Naive thymus-derived CD4-positive, alpha-beta T cell (primary cell): ENCODE measurements at regions of chr2 and their contacts with region 1.

Region 1: GRCh38 chr2:201071479-201072200 is at the starts of genes HYCC2 and NDUFB3:
- DNase-seq: peak; percentile 79 to 96 (median 95)
- ATAC-seq: peak; percentile 98
- H3K4me3 ChIP-seq: peak within 1 kb of the TSS; percentile 92
- H3K4me3 Mint-ChIP-seq: peak within 1 kb of the TSS; percentile 91 to 99 (median 94)
- H3K27ac ChIP-seq: peak within 1 kb of the TSS; percentile 83
- H3K27ac Mint-ChIP-seq: peak within 1 kb of the TSS; percentile 86 to 99 (median 95)
- H3K4me1 ChIP-seq: peaks cover 32 to 36% of the 10 kb centered on the region in 2 donors
- H3K4me1 Mint-ChIP-seq: peaks cover 31 to 74% (median 55%) of the 10 kb centered on the region in 7 donors
- H3K27me3 ChIP-seq: no peaks in the 10 kb centered on the region
- H3K27me3 Mint-ChIP-seq: no peaks in the 10 kb centered on the region
- total RNA-seq, gene HYCC2: 34.8 to 38.3 (median 36.1) TPM
- total RNA-seq, gene NDUFB3: 18.3 to 109 (median 38.3) TPM

Region 2: DNA sequence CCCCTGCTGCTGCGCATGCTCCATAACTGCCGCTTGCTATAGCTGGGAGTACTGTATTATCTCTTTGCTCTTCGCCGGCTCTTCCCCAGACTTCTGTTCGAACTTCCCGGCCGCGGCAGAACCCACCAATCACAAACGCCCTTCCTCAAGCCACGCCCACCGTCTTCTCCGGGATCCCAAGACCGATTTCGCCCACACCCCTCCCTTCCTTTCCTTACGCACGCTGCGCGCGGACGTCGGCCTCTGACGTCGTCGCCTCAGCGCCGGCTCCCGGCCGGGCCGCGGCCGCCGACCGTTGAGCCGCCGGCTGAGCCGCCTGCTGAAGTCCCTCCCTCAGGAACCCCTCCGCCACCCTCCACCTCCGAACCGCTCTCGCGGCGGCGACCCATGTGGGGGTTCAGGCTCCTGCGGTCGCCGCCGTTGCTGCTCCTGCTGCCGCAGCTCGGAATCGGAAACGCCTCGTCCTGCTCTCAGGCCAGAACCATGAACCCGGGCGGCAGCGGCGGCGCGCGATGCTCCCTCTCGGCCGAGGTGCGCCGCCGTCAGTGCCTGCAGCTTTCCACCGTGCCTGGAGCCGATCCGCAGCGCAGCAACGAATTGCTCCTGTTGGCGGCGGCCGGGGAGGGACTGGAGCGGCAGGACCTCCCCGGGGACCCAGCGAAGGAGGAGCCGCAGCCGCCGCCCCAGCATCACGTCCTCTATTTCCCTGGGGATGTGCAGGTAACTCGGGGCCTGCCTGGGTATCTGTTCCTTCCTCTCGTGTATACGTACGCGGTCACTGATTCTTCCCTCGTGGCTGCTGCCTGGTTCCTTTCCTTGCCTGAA is 1160.4 kb before region 1 on chr2 and contains the start of gene C2orf69:
- CTCF ChIA-PET with region 1: no interaction called
- POLR2A ChIA-PET with region 1: no interaction called
- intact Hi-C with region 1: loop called in 1 of 2 experiments (anchors 5 kb)
- DNase-seq: peak; percentile 80 to 92 (median 83)
- ATAC-seq: peak; percentile 93
- H3K4me3 ChIP-seq: peak within 1 kb of the TSS; percentile 75
- H3K4me3 Mint-ChIP-seq: peak within 1 kb of the TSS; percentile 89 to 100 (median 98)
- H3K27ac ChIP-seq: peak within 1 kb of the TSS; percentile 89
- H3K27ac Mint-ChIP-seq: peak within 1 kb of the TSS; percentile 72 to 95 (median 94)
- H3K4me1 ChIP-seq: peaks cover 11 to 19% of the 10 kb centered on the region in 2 donors
- H3K4me1 Mint-ChIP-seq: peaks cover 26 to 47% (median 37%) of the 10 kb centered on the region in 7 donors
- H3K27me3 ChIP-seq: no peaks in the 10 kb centered on the region
- H3K27me3 Mint-ChIP-seq: peaks cover 0 to 14% (median 8%) of the 10 kb centered on the region in 5 donors
- total RNA-seq, gene C2orf69: 10.1 to 15.4 (median 12.7) TPM

Region 3: GRCh38 chr2:200578778-200579177 is 492.9 kb before region 1 on chr2:
- CTCF ChIA-PET with region 1: no interaction called
- POLR2A ChIA-PET with region 1: no interaction called
- intact Hi-C with region 1: loop called in 1 of 2 experiments (anchors 1 kb)
- DNase-seq: peak in 4 of 9 donors; percentile 3 to 13 (median 10)
- ATAC-seq: peak; percentile 64
- H3K4me3 ChIP-seq: no peak overlapping the region
- H3K4me3 Mint-ChIP-seq: no peak overlapping the region
- H3K27ac ChIP-seq: no peak overlapping the region
- H3K27ac Mint-ChIP-seq: no peak overlapping the region
- H3K4me1 ChIP-seq: no peaks in the 10 kb centered on the region
- H3K4me1 Mint-ChIP-seq: peaks cover 0 to 15% (median 0%) of the 10 kb centered on the region in 7 donors
- H3K27me3 ChIP-seq: no peaks in the 10 kb centered on the region
- H3K27me3 Mint-ChIP-seq: peaks cover 0 to 5% (median 4%) of the 10 kb centered on the region in 5 donors

Region 4: DNA sequence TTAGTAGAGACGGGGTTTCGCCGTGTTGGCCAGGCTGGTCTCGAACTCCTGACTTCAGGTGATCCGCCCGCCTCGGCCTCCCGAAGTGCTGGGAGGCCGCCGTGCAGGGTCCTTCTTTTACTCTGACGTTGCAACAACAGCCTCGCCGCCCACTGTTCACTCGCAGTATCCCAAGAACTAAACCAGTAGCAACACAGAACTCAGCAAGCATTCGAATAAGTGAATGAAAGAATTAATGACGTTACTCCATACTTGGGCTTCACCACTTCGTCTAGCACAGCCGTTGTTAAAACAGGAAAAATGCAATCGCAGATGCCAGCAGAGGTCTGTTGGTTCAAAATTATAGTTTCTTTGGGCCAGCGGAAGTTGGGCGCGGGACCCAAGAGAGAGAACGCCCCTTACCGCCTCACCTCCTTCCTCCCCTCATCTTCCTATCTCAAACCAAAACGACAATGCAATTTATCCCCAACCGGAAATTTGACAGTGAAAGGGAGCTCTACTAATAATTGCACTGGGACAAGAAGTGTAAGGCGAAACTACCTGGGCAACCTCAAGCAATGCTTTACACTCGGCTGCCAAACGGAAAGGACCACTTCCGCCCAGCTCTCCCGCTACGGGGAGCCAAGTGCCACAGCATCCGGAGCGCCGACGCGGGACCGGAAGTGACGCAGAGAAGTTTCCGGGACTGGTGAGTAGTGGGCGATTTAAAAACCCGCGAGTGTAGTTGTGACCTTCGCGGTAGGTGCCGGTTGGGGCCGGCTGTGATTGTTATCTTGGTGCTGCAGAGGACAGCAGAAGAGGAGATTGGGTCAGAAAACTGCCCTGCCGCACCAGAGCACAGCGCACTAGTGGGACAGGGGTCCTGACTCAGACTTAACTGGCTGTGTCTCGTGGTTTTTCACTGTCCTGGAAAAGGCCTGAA is 182.7 kb before region 1 on chr2 and contains the starts of genes NIF3L1 and PPIL3:
- CTCF ChIA-PET with region 1: interaction called, 3 read pairs
- POLR2A ChIA-PET with region 1: interaction called, 7 read pairs
- intact Hi-C with region 1: loop called (anchors 1 kb)
- DNase-seq: peak; percentile 88 to 97 (median 95)
- ATAC-seq: peak; percentile 89
- H3K4me3 ChIP-seq: peak within 1 kb of the TSS; percentile 83
- H3K4me3 Mint-ChIP-seq: peak within 1 kb of the TSS; percentile 88 to 100 (median 96)
- H3K27ac ChIP-seq: peak within 1 kb of the TSS; percentile 86
- H3K27ac Mint-ChIP-seq: peak within 1 kb of the TSS; percentile 97 to 100 (median 100)
- H3K4me1 ChIP-seq: peaks cover 23 to 26% of the 10 kb centered on the region in 2 donors
- H3K4me1 Mint-ChIP-seq: peaks cover 35 to 75% (median 60%) of the 10 kb centered on the region in 7 donors
- H3K27me3 ChIP-seq: no peaks in the 10 kb centered on the region
- H3K27me3 Mint-ChIP-seq: no peaks in the 10 kb centered on the region
- total RNA-seq, gene NIF3L1: 11.5 to 33.9 (median 31.4) TPM
- total RNA-seq, gene PPIL3: 28.5 to 69.7 (median 49.1) TPM

Region 5: GRCh38 chr2:201040867-201041628 is 30.6 kb before region 1 on chr2:
- CTCF ChIA-PET with region 1: no interaction called
- POLR2A ChIA-PET with region 1: no interaction called
- intact Hi-C with region 1: no loop called
- DNase-seq: no peak
- ATAC-seq: no peak
- H3K4me3 ChIP-seq: no peak overlapping the region
- H3K4me3 Mint-ChIP-seq: no peak overlapping the region
- H3K27ac ChIP-seq: no peak overlapping the region
- H3K27ac Mint-ChIP-seq: peak overlapping the region in 2 of 9 donors; percentile 1 to 60
- H3K4me1 ChIP-seq: no peaks in the 10 kb centered on the region
- H3K4me1 Mint-ChIP-seq: peaks cover 3 to 16% (median 9%) of the 10 kb centered on the region in 7 donors
- H3K27me3 ChIP-seq: no peaks in the 10 kb centered on the region
- H3K27me3 Mint-ChIP-seq: no peaks in the 10 kb centered on the region

Region 6: DNA sequence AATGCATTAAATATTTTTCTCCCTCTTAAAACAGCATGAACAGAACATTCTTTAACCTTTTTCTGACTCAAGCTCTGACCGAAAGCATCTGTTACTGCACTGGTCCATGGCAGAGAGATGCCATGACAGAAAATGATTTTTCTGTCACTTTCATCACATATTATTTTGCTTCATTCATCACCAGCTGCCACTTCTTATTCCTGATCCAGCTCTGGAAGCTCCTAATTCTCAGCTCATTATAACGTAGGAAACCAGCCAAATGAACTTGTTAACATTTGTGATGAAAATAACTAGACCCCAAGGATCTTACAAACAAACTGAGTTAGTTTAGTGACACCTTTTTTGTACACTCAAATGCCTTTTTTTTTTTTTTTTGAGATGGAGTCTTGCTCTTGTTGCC is 36.7 kb after region 1 on chr2:
- CTCF ChIA-PET with region 1: no interaction called
- POLR2A ChIA-PET with region 1: no interaction called
- intact Hi-C with region 1: no loop called
- DNase-seq: no peak
- ATAC-seq: no peak
- H3K4me3 ChIP-seq: no peak overlapping the region
- H3K4me3 Mint-ChIP-seq: no peak overlapping the region
- H3K27ac ChIP-seq: no peak overlapping the region
- H3K27ac Mint-ChIP-seq: no peak overlapping the region
- H3K4me1 ChIP-seq: no peaks in the 10 kb centered on the region
- H3K4me1 Mint-ChIP-seq: peaks cover 1 to 13% (median 4%) of the 10 kb centered on the region in 7 donors
- H3K27me3 ChIP-seq: no peaks in the 10 kb centered on the region
- H3K27me3 Mint-ChIP-seq: no peaks in the 10 kb centered on the region

Region 7: GRCh38 chr2:201158111-201158929 is 86.7 kb after region 1 on chr2:
- CTCF ChIA-PET with region 1: interaction called, 53 read pairs
- POLR2A ChIA-PET with region 1: interaction called, 6 read pairs
- intact Hi-C with region 1: loop called (anchors 1 kb)
- DNase-seq: peak in 7 of 9 donors; percentile 62 to 78 (median 72)
- ATAC-seq: peak; percentile 92
- H3K4me3 ChIP-seq: no peak overlapping the region
- H3K4me3 Mint-ChIP-seq: peak overlapping the region in 3 of 10 donors; percentile 16 to 64 (median 33)
- H3K27ac ChIP-seq: peak overlapping the region; percentile 52
- H3K27ac Mint-ChIP-seq: peak overlapping the region; percentile 26 to 93 (median 89)
- H3K4me1 ChIP-seq: peaks cover 6 to 7% of the 10 kb centered on the region in 2 donors
- H3K4me1 Mint-ChIP-seq: peaks cover 12 to 35% (median 16%) of the 10 kb centered on the region in 7 donors
- H3K27me3 ChIP-seq: no peaks in the 10 kb centered on the region
- H3K27me3 Mint-ChIP-seq: no peaks in the 10 kb centered on the region

Region 8: DNA sequence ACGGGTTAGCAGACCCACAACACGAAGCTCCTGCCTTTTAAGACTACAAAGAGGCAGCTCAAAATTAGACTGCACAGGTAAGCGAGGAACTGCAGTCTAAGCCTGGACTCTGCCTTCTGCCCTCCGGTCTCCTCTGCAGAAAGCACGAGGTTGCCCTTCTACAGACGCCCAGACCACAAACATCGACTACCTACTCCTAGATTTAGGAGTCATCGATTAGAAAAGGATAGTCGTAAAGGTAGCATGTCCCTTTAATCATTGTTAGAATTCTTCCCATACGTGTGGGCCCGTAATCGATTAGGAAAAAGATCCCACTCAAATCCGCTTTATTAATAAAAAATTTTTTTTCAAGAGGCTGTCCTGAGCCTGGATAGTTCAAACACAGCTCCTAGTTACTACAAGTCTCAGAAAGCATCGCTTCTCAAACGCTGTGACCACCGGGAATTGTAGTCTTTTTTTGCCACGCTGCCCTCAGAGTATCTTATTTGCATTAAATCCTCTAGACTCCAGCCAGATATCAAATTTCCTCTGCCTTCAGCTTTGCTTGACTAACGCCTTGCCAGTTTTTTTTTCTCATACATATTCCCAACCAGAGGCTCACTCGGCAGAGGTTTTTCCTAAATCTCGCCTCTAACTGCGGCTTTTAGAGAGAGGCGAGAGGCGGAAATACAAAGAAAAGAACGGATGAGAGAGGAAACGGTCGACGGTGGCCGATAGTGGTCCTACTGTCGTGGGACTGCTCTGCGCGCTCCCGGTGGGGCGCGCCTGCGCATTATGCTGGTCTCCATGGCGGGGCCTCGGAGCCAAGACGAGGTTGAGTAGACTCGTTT is 1840.1 kb after region 1 on chr2 and contains the starts of genes CARF and WDR12:
- CTCF ChIA-PET with region 1: no interaction called
- POLR2A ChIA-PET with region 1: no interaction called
- intact Hi-C with region 1: loop called in 1 of 2 experiments (anchors 5 kb)
- DNase-seq: peak; percentile 81 to 93 (median 89)
- ATAC-seq: peak; percentile 93
- H3K4me3 ChIP-seq: peak within 1 kb of the TSS; percentile 82
- H3K4me3 Mint-ChIP-seq: peak within 1 kb of the TSS; percentile 90 to 100 (median 98)
- H3K27ac ChIP-seq: peak within 1 kb of the TSS; percentile 79
- H3K27ac Mint-ChIP-seq: peak within 1 kb of the TSS; percentile 93 to 99 (median 97)
- H3K4me1 ChIP-seq: peaks cover 4 to 11% of the 10 kb centered on the region in 2 donors
- H3K4me1 Mint-ChIP-seq: peaks cover 24 to 50% (median 34%) of the 10 kb centered on the region in 7 donors
- H3K27me3 ChIP-seq: no peaks in the 10 kb centered on the region
- H3K27me3 Mint-ChIP-seq: no peaks in the 10 kb centered on the region
- total RNA-seq, gene CARF: 10.2 to 31.2 (median 15.4) TPM
- total RNA-seq, gene WDR12: 17.2 to 50.4 (median 20.8) TPM